Cardiac septum (tissue), 1 donor: ENCODE measurements at regions of chr6 and their contacts with region 1.

Region 1: GRCh38 chr6:124870611-124871459 is 91.4 kb upstream of the RNF217 start:
- DNase-seq: no peak

Region 2: DNA sequence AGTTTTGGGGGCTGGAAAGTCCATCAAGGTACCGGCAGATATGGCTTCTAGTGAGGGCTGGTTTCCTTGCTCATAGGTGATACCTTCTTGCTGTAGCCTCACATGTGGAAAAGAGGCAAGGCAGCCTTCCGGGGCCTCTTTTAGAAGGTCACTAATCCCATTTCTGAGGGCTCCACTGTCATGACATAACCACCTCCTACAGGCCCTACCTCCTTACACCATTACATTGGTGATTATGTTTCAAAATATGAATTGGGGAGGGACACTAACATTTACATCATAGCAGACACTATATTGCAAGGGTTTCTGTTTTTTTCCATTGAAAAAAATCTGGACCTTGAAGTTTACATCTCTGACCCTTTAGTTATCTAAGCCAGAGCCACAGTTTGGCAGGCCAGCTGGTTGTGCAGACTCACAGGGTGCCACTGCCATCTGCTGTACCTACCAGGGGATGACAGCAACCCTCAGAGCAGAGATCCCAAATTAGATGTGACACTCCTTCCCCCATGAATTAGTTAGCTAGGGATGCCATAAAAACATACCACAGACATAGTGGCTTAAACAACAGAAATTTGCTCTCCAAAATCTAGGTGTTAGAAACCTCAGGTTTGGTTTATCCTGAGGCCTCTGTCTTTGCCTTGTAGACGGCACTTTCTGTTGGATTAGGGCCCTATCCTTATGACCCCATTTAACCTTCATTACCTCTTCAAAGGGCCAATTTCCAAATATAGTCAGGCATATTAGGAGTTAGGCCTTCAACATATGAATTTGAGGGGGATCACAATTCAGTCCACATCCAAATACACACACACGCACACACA is 75.0 kb before region 1 on chr6:
- intact Hi-C with region 1: no loop called
- DNase-seq: no peak

Region 3: DNA sequence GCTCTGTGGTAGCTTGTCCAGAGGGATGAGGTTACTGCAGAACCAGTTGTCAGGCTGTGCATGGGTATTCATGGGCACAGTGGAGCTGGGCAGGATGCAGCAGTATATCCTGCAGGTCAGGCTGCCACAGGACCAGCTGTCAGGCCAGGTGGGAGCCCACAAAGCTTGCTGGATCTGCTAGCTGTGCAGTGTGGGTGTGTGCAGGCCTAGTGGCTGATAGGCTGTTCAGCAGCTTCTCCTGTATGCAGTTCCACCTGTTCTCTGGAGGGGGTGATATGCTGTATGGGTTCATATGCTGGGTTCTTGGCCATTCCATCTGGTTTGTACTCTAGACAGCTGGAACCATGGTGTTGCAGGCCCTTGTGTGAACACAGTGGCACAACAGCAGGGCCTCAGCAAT is 242.1 kb after region 1 on chr6:
- intact Hi-C with region 1: loop called (anchors 2 kb)
- DNase-seq: no peak